Right cardiac atrium (tissue), 5 donors: ENCODE measurements at regions of chr3 and their contacts with region 1.

Region 1: DNA sequence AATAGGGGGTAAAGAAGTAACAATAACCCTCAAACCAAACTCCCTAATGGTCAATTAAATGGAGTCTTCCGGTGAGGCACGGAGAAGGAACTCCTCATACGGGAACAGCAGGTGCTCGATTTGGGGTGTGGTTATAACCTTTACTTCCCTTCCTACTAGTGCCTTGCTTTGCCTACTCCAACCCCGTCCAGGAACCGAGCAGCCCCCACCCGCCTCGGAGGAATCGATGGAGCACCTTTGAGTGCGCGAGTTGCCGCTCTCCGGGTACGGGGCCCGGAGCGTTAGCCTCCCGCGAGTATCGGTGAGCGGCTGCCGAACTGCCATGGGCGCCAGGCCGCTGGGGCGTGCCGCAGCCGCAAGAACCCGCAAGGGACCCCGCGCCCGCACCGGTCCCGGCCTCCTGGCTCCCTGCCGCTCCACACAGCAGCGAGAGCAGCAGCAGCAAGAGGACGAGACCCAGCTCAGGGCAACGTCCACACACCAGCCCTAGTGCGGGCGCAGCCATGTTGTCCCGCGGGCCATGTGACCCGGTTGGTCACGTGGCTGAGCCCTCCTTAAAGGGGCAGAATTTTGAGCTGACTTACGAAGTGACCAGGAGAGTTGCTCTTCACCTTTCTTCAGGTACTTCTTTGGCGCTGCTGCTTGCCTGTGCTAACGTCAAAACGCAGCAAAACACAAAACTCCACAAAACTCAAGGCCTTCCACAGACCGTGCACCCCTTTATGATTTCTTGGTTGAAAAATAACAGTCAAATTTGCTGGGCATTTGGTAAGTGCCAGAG is at the start of gene SUMF1:
- DNase-seq: peak; percentile 78 to 93 (median 90)
- ATAC-seq: peak; percentile 98 to 99
- H3K4me3 ChIP-seq: peak within 1 kb of the TSS; percentile 68
- H3K27ac ChIP-seq: peak within 1 kb of the TSS; percentile 36
- H3K4me1 ChIP-seq: no peaks in the 10 kb centered on the region
- H3K27me3 ChIP-seq: no peaks in the 10 kb centered on the region
- total RNA-seq, gene SUMF1: 9.6 to 14.4 (median 11.8) TPM

Region 2: GRCh38 chr3:4350789-4351163 is 116.2 kb before region 1 on chr3:
- intact Hi-C with region 1: loop called in 1 of 4 experiments (anchors 10 kb)
- DNase-seq: no peak
- ATAC-seq: peak; percentile 90 to 92
- H3K4me3 ChIP-seq: peak overlapping the region; percentile 60
- H3K27ac ChIP-seq: no peak overlapping the region
- H3K4me1 ChIP-seq: no peaks in the 10 kb centered on the region
- H3K27me3 ChIP-seq: no peaks in the 10 kb centered on the region

Region 3: GRCh38 chr3:4730719-4731118 is 263.8 kb after region 1 on chr3:
- intact Hi-C with region 1: no loop called
- DNase-seq: peak; percentile 60 to 78 (median 77)
- ATAC-seq: peak; percentile 77 to 78
- H3K4me3 ChIP-seq: no peak overlapping the region
- H3K27ac ChIP-seq: no peak overlapping the region
- H3K4me1 ChIP-seq: no peaks in the 10 kb centered on the region
- H3K27me3 ChIP-seq: no peaks in the 10 kb centered on the region